Activated T-helper 2 cell treated with anti-CD3 and anti-CD28 coated beads, Interferon-gamma antibody, Interleukin-2, Interleukin-4, amounts not matched to agents 10 μg/mL and 5 μg/mL and 100 μg/mL, durations not matched to agents 14 hours and 24 hours and 36 hours (primary cell): ENCODE measurements at regions of chr11 and their contacts with region 1.

Region 1: GRCh38 chr11:114340311-114341131 is 44.3 kb downstream of the NNMT start:
- DNase-seq: no peak
- H3K4me3 Mint-ChIP-seq: peak overlapping the region; percentile 43
- H3K27ac Mint-ChIP-seq: no peak overlapping the region
- H3K4me1 Mint-ChIP-seq: peaks cover 9% of the 10 kb centered on the region
- H3K27me3 Mint-ChIP-seq: peaks cover 20% of the 10 kb centered on the region

Region 2: DNA sequence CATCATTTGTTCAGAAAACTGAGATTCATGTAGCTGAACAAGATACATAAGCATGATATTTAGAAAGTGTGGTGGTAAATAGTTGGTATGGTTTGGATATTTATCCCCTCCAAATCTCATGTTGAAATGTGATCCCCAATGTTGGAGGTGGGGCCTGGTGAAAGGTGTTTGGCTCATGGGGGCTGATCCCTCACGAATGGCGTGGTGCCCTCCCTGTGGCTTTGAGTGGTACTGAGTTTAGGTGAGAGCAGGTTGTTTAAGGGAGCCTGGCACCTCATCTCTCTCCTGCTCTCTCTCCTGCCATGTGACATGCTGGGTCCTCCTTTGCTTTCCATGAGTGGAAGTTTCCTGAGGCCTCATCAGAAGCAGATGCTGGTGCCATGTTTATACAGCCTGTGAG is 171.0 kb after region 1 on chr11:
- intact Hi-C with region 1: loop called (anchors 10 kb)
- DNase-seq: no peak
- H3K4me3 Mint-ChIP-seq: no peak overlapping the region
- H3K27ac Mint-ChIP-seq: no peak overlapping the region
- H3K4me1 Mint-ChIP-seq: no peaks in the 10 kb centered on the region
- H3K27me3 Mint-ChIP-seq: peaks cover 6% of the 10 kb centered on the region

Region 3: DNA sequence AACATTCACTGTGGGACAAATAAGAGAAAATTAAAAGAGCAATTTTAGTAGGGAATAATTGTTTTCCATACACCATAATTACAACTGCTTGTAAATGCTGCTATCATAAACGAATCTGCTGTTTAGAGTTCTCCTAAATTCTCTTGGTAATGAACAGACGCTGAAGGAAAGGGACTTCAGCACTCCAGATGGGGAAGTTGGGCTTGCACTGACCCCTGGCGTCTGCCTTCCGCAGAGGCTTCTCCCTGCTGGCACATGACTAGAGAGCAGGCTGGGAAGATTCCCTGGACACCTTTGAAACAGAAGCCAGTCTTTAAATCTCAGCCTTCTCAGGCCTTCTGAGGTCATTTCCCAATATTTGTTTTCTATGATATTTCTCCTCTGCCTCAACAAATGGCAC is 421.9 kb after region 1 on chr11:
- intact Hi-C with region 1: loop called (anchors 2 kb)
- DNase-seq: no peak
- H3K4me3 Mint-ChIP-seq: no peak overlapping the region
- H3K27ac Mint-ChIP-seq: no peak overlapping the region
- H3K4me1 Mint-ChIP-seq: no peaks in the 10 kb centered on the region
- H3K27me3 Mint-ChIP-seq: peaks cover 1% of the 10 kb centered on the region